Colonic mucosa (tissue), 4 donors: ENCODE measurements at regions of chr13 and their contacts with region 1.

Region 1: DNA sequence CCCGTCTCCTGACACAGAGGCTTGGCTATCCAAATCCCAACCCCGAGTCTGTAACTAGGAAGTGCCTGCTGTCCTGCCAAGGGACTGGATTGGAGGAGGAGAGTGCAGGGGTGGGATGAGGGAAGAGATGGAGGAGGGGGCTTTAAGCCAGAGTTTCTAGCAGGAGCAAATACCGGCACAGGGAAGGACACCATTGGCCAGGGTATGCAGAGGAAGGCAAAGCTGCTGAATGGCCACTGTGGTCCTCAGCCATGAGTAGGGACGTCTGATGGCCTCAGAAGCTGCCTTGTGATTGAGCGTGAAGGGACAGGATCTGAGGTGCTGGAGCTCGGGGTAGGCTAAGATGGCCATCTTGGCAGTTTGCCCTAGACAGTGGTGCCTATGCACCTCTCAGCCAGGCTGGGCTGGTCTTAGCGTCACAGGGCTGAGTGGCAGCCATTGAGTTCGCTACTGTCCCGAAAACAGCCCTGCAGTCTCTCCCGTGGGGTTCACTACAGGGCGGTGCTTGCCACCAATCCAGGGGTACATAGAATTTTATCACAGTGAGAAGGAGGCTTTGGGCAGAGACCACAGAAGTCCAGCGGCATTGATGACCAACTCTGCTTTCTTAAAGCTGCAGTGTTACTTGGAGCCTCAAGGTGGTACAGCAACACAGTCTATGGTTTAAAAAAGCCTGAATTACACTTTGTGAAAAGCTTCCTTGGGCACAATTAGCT is 61.8 kb downstream of the AKAP11 start:
- DNase-seq: no peak
- H3K4me3 ChIP-seq: no peak overlapping the region
- H3K27ac ChIP-seq: no peak overlapping the region
- H3K4me1 ChIP-seq: no peaks in the 10 kb centered on the region
- H3K27me3 ChIP-seq: no peaks in the 10 kb centered on the region
- CTCF ChIP-seq: peak; percentile 34

Region 2: GRCh38 chr13:42478531-42479156 is 144.9 kb after region 1 on chr13:
- intact Hi-C with region 1: loop called (anchors 10 kb)
- DNase-seq: no peak
- H3K4me3 ChIP-seq: no peak overlapping the region
- H3K27ac ChIP-seq: no peak overlapping the region
- H3K4me1 ChIP-seq: no peaks in the 10 kb centered on the region
- H3K27me3 ChIP-seq: no peaks in the 10 kb centered on the region
- CTCF ChIP-seq: peak; percentile 34

Region 3: GRCh38 chr13:42671502-42671901 is 337.7 kb after region 1 on chr13:
- intact Hi-C with region 1: no loop called
- DNase-seq: no peak
- H3K4me3 ChIP-seq: no peak overlapping the region
- H3K27ac ChIP-seq: no peak overlapping the region
- H3K4me1 ChIP-seq: no peaks in the 10 kb centered on the region
- H3K27me3 ChIP-seq: no peaks in the 10 kb centered on the region
- CTCF ChIP-seq: no peak